CD4-positive, alpha-beta T cell (primary cell): ENCODE measurements at regions of chr3 and their contacts with region 1.

Region 1: DNA sequence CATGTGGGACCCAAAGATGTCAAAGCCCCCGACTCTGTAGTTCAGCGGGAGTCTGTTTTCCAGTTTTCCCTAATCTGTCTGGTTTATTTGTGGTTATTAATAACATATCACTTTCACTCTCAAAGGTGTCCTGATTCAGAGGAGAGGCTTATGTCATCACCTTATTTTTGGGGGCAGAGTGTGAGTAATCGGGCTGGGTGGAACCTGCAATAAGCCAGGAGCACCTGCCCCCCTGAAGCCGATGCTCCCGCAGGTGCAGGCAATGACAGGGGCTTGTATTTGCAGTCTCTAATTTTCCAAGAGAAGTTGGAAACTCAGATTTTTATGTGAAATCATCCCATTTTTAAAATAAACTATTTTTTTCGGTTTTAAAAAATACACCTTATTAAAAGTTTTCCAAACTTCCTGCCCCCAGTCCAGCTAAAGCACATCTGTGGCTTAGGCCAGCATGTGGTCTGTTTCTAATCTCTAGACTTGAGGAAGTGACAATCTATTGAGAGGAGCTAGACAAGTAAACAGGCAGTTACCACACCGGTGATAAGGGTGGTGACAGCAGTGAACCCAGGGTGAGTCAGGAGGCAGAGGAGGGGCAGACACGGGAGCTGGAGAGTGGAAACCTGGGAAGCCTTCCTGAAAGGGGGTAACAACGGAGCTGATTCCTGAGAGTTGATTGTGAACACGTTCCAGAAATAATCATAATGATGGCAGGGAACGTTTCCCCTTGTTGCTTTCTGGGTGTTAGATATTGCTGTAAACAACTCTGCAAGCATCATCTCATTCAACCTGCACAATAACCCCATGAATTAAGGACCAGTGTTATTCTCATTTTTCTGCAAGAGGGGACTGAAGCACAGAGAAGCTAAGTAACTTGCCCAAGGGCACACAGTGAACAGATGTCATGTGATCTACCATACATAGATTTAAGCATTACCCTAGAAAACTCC is 37.3 kb downstream of the BHLHE40 start:
- DNase-seq: peak in 12 of 14 experiments; percentile 13 to 80 (median 34)
- ATAC-seq: peak; percentile 44
- H3K4me3 ChIP-seq: no peak overlapping the region
- H3K4me3 Mint-ChIP-seq: peak overlapping the region; percentile 43
- H3K27ac ChIP-seq: no peak overlapping the region
- H3K27ac Mint-ChIP-seq: peak overlapping the region; percentile 86
- H3K4me1 ChIP-seq: peaks cover 68% of the 10 kb centered on the region
- H3K4me1 Mint-ChIP-seq: peaks cover 46% of the 10 kb centered on the region
- H3K27me3 ChIP-seq: no peaks in the 10 kb centered on the region
- H3K27me3 Mint-ChIP-seq: no peaks in the 10 kb centered on the region
- CTCF ChIP-seq: no peak

Region 2: DNA sequence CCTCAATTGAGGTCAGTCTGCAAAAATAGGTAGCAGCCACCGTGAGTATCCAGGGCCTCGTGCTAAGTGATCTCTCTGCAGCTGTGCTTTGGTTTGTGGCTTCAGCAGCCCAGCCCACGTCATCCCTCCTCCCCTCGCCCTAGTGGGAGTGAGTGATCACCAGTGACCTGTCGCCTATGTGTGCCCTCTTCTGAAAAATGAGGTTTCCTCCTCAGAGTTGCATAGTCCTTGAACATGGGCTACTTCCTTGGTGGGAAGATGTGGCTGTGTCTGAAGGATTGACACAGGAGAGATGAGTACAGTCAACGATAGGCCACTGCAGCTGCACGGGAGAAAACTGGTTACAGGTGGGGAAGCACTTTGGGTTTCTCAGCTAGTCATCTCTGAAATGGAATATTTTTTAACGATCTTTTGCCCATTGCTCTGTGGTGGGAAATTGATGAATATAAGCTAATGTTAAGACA is 182.1 kb before region 1 on chr3:
- CTCF ChIA-PET with region 1: no interaction called
- POLR2A ChIA-PET with region 1: interaction called, 4 read pairs
- intact Hi-C with region 1: loop called in 1 of 2 experiments (anchors 5 kb)
- DNase-seq: peak; percentile 49 to 91 (median 60)
- ATAC-seq: peak; percentile 35
- H3K4me3 ChIP-seq: no peak overlapping the region
- H3K4me3 Mint-ChIP-seq: peak overlapping the region; percentile 55
- H3K27ac ChIP-seq: peak overlapping the region; percentile 19 to 24
- H3K27ac Mint-ChIP-seq: peak overlapping the region; percentile 92
- H3K4me1 ChIP-seq: peaks cover 75% of the 10 kb centered on the region
- H3K4me1 Mint-ChIP-seq: peaks cover 76% of the 10 kb centered on the region
- H3K27me3 ChIP-seq: no peaks in the 10 kb centered on the region
- H3K27me3 Mint-ChIP-seq: no peaks in the 10 kb centered on the region
- CTCF ChIP-seq: no peak

Region 3: GRCh38 chr3:4986782-4987537 is 29.5 kb before region 1 on chr3:
- CTCF ChIA-PET with region 1: interaction called, 23 read pairs
- POLR2A ChIA-PET with region 1: interaction called, 16 read pairs
- intact Hi-C with region 1: loop called in 1 of 2 experiments (anchors 1 kb)
- DNase-seq: peak; percentile 45 to 88 (median 58)
- ATAC-seq: peak; percentile 37
- H3K4me3 ChIP-seq: peak overlapping the region; percentile 67
- H3K4me3 Mint-ChIP-seq: peak overlapping the region; percentile 86
- H3K27ac ChIP-seq: peak overlapping the region; percentile 29 to 59
- H3K27ac Mint-ChIP-seq: peak overlapping the region; percentile 89
- H3K4me1 ChIP-seq: peaks cover 55% of the 10 kb centered on the region
- H3K4me1 Mint-ChIP-seq: peaks cover 45% of the 10 kb centered on the region
- H3K27me3 ChIP-seq: no peaks in the 10 kb centered on the region
- H3K27me3 Mint-ChIP-seq: no peaks in the 10 kb centered on the region
- CTCF ChIP-seq: no peak

Region 4: GRCh38 chr3:5032844-5033243 is 16.4 kb after region 1 on chr3:
- CTCF ChIA-PET with region 1: no interaction called
- POLR2A ChIA-PET with region 1: no interaction called
- intact Hi-C with region 1: no loop called
- DNase-seq: no peak
- ATAC-seq: no peak
- H3K4me3 ChIP-seq: no peak overlapping the region
- H3K4me3 Mint-ChIP-seq: no peak overlapping the region
- H3K27ac ChIP-seq: no peak overlapping the region
- H3K27ac Mint-ChIP-seq: no peak overlapping the region
- H3K4me1 ChIP-seq: no peaks in the 10 kb centered on the region
- H3K4me1 Mint-ChIP-seq: no peaks in the 10 kb centered on the region
- H3K27me3 ChIP-seq: no peaks in the 10 kb centered on the region
- H3K27me3 Mint-ChIP-seq: no peaks in the 10 kb centered on the region
- CTCF ChIP-seq: no peak

Region 5: DNA sequence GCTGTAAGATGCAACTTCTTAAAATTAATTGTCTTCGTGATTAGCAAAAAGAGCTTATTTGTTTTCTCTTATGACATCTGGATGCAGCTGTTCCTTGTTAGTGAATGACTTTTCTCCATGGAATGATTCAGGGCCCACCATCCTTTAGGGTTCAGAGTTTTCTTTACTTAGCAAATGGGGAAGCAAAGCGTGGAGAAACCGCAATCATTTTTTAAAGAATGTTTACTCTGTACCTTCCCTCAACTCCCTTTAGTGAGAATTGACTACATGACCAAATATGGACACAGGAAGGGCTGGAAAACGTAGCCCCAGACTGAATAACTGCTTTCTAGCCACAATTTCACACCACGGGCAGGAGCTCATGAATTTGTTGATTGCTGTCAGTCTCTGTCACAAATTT is 301.1 kb after region 1 on chr3:
- CTCF ChIA-PET with region 1: no interaction called
- POLR2A ChIA-PET with region 1: no interaction called
- intact Hi-C with region 1: no loop called
- DNase-seq: no peak
- ATAC-seq: no peak
- H3K4me3 ChIP-seq: no peak overlapping the region
- H3K4me3 Mint-ChIP-seq: no peak overlapping the region
- H3K27ac ChIP-seq: no peak overlapping the region
- H3K27ac Mint-ChIP-seq: no peak overlapping the region
- H3K4me1 ChIP-seq: no peaks in the 10 kb centered on the region
- H3K4me1 Mint-ChIP-seq: no peaks in the 10 kb centered on the region
- H3K27me3 ChIP-seq: no peaks in the 10 kb centered on the region
- H3K27me3 Mint-ChIP-seq: peaks cover 8% of the 10 kb centered on the region
- CTCF ChIP-seq: no peak

Region 6: DNA sequence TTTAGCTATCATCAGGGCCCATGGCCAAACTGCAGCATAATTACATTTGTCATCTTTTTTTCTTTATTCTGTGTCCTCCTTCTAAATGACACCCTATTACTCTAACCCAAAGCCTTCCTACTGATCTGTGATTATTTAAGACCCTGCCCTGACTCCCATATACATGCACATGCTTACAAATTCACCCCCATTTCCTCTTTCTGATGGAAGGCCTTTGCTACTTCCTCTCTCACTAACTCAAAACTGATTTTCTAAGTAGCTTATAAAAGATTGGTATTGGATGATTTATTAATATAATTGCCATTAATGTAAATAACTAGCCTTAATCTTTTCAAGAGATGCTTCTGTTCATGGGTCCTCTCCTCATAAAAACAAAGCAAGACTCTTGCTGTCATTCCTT is 350.3 kb after region 1 on chr3:
- CTCF ChIA-PET with region 1: no interaction called
- POLR2A ChIA-PET with region 1: no interaction called
- intact Hi-C with region 1: no loop called
- DNase-seq: no peak
- ATAC-seq: no peak
- H3K4me3 ChIP-seq: no peak overlapping the region
- H3K4me3 Mint-ChIP-seq: no peak overlapping the region
- H3K27ac ChIP-seq: no peak overlapping the region
- H3K27ac Mint-ChIP-seq: no peak overlapping the region
- H3K4me1 ChIP-seq: no peaks in the 10 kb centered on the region
- H3K4me1 Mint-ChIP-seq: no peaks in the 10 kb centered on the region
- H3K27me3 ChIP-seq: no peaks in the 10 kb centered on the region
- H3K27me3 Mint-ChIP-seq: no peaks in the 10 kb centered on the region
- CTCF ChIP-seq: no peak